ENCODE measurements at regions of chr16 and their contacts with region 1.

Region 1: DNA sequence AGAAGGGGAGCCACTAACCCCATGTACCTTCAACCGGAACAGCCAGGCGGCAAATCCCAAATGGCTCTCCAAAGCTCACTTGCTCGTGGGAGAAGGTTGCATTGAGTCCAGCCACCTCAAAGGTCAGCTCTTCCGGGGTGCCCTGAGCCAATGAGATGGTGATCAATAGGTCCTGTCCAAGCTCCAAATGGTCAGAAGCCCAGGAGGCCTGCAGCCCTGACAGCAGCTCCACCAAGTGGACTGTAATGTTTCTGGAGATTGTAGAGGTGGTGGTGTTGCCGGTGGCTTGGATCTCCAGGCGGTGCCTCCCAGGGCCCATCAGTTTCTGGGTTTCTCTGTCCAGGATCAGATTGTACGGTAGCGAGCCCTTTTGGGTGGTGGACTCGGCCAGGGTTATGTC is 39.9 kb upstream of the BCO1 start:
- DNase-seq: no peak
- ATAC-seq: no peak

Region 2: DNA sequence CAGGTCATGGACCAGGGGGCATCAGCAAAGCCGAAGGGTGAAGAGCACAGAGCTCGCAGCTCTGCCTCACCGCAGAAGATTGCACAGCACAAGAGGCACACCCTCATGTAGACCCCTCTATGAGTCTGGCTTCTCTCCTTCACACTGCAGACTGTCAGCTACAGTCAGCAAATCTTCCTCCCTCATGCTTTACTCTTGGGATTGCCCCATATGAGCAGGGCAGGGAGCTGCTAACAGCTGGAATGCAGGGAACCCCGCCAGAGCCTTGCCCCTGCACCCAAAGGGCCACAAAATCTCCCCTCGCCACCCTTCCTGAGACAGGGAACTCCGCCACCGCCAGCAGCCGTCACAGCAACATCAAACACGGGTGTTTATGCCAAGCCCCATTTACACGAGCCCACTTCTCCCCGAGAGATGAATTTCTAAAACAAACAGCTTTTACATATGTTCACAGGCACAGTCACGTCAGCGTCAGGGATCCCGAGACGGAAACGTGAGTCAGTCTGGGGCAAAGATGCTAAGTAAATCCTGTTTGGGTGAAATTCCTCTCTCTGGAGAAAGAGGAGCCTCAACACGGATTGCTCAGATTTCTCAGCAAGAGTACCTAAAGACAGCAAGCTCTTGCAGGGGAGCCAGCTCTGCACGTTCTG is 516.1 kb before region 1 on chr16:
- intact Hi-C with region 1: loop called in 1 of 2 experiments (anchors 5 kb)
- DNase-seq: no peak
- ATAC-seq: no peak